Keratinocyte (primary cell): ENCODE measurements at regions of chr4 and their contacts with region 1.

Region 1: GRCh38 chr4:185640811-185641675 is 105.7 kb upstream of the PDLIM3 start:
- DNase-seq: peak; percentile 17
- H3K4me3 ChIP-seq: no peak overlapping the region
- H3K27ac ChIP-seq: no peak overlapping the region
- H3K4me1 ChIP-seq: no peaks in the 10 kb centered on the region
- H3K27me3 ChIP-seq: peaks cover 11% of the 10 kb centered on the region
- CTCF ChIP-seq: peak in 1 of 3 experiments; percentile 19

Region 2: DNA sequence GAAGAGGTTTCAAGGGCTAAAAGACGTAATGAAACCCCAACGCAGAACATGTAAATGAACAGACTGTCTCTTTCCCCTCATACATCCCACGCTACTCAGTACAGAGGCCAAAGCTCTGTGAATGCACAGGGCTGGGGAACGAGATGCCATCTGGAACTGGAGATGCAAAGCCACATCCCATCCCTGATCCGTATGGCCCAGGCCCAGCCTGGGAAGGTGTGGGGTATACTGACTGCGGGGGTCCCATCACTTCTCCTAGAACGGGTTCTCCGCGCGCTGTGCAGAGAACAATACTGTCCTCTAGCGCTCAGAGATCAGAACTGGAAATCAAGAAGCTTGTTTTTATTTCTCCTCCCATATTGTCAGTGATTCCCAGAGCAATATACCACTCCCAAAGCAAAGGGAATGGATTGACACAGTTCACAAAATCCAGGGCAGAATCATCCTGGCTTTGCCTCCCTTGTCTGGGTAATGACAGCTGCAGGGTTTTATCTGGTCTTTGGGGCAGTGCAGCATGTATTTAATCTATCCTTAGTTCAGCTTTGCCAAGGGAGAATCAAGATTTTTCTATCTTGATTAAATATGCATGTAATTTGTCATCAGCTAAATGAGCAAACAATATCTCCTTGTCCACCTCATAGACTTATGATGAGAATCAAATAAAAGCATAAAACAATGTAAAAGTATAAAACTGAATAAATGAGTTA is 380.6 kb after region 1 on chr4:
- dilution Hi-C with region 1: loop called (anchors 25 kb)
- DNase-seq: no peak
- H3K4me3 ChIP-seq: no peak overlapping the region
- H3K27ac ChIP-seq: no peak overlapping the region
- H3K4me1 ChIP-seq: no peaks in the 10 kb centered on the region
- H3K27me3 ChIP-seq: no peaks in the 10 kb centered on the region
- CTCF ChIP-seq: peak; percentile 58 to 88 (median 62)